ENCODE measurements at regions of chr9 and their contacts with region 1.

Region 1: GRCh38 chr9:35657546-35658136 is at the start of gene RMRP:
- DNase-seq: peak; percentile 99
- H3K4me3 ChIP-seq: peak within 1 kb of the TSS; percentile 97
- CTCF ChIP-seq: peak; percentile 42

Region 2: GRCh38 chr9:35211854-35212253 is 445.8 kb before region 1 on chr9:
- CTCF ChIA-PET with region 1: no interaction called
- POLR2A ChIA-PET with region 1: no interaction called
- DNase-seq: no peak
- H3K4me3 ChIP-seq: no peak overlapping the region
- CTCF ChIP-seq: no peak

Region 3: GRCh38 chr9:35526087-35526801 is 131.4 kb before region 1 on chr9:
- CTCF ChIA-PET with region 1: no interaction called
- POLR2A ChIA-PET with region 1: no interaction called
- DNase-seq: no peak
- H3K4me3 ChIP-seq: no peak overlapping the region
- CTCF ChIP-seq: no peak

Region 4: DNA sequence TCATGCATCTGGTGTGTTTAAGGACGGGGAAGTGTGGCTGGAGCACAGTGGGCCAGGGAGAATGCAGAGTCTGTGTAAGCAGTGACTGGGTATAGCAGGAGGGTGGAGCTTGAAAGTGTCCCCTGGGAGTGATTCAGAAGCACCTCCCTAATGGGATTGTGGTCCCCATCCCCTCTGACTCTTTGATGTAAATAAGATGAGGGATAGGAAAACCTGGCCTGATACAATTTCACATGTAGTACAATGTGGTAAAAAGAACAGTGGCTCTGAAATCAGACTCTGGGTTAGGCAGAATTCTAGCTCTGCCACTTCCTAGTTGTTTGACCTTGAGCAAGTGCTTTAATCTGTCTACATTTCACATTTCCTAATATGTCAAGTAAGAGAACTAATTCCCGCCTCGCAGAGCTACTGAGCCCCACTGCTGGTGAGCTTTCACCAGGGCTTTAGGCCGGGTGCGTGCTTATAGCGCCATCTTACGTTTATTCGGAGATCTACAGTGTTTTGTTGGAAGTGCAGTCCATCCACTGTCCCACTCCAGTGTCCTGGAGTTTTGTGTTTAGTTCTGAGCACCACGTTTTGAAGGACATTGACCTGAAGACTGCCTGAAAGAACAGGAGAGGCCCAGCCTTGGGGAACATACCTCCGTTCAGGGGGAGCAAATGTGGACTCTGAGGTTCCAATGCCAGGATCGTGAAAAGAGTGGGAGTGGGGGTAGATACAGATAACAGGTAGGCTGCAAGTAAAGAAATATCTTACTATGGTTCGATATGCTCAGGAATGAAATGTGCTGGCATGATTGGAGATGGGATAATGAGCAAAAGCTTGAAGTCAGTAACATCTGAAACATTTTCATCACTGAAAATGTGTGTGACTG is 103.7 kb before region 1 on chr9:
- CTCF ChIA-PET with region 1: no interaction called
- POLR2A ChIA-PET with region 1: no interaction called
- DNase-seq: no peak
- H3K4me3 ChIP-seq: no peak overlapping the region
- CTCF ChIP-seq: peak; percentile 68

Region 5: DNA sequence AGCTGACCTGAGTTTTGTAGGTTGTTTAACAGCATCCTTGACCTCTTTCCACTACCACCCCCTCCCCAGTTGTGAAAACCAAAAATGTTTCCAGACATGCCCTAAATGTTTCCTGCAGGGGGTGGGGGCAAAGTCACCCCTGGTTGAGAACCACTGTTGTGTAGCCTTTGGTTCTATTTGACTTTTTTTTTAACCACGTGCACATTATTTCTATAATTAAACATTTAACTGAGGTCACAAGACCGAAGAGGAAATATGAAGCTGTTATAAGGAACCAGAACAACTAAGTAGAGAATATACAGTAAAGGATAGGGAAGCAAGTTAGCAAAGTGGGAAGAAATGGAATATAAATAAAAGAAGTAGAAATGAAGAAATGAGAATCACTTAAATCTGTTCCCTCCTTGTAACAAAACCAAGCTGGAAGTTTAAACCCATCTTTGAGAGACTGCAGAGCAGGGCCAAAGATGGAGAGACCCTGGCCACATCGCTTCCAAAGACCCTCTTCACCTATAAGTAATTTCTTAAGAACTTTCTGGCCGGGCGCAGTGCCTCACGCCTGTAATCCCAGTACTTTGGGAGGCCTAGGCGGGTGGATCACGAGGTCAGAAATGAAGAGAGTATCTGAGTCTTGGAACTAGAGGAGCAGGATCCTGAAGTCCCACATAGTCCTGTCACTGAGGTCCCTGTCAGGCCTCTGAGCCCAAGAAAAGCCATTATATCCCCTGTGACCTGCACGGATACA is 21.3 kb before region 1 on chr9:
- CTCF ChIA-PET with region 1: no interaction called
- POLR2A ChIA-PET with region 1: no interaction called
- DNase-seq: no peak
- H3K4me3 ChIP-seq: no peak overlapping the region
- CTCF ChIP-seq: no peak

Region 6: GRCh38 chr9:35646533-35647265 is 10.9 kb before region 1 on chr9:
- CTCF ChIA-PET with region 1: interaction called, 148 read pairs
- POLR2A ChIA-PET with region 1: interaction called, 7 read pairs
- DNase-seq: no peak
- H3K4me3 ChIP-seq: peak overlapping the region; percentile 74
- CTCF ChIP-seq: peak; percentile 99

Region 7: DNA sequence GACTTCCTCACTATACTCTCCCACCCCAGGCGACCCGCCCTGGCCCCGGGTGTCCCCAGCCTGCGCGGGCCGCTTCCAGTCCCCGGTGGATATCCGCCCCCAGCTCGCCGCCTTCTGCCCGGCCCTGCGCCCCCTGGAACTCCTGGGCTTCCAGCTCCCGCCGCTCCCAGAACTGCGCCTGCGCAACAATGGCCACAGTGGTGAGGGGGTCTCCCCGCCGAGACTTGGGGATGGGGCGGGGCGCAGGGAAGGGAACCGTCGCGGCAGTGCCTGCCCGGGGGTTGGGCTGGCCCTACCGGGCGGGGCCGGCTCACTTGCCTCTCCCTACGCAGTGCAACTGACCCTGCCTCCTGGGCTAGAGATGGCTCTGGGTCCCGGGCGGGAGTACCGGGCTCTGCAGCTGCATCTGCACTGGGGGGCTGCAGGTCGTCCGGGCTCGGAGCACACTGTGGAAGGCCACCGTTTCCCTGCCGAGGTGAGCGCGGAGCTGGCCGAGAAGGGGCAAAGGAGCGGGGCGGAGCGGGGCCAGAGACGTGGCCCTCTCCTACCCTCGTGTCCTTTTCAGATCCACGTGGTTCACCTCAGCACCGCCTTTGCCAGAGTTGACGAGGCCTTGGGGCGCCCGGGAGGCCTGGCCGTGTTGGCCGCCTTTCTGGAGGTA is 18.2 kb after region 1 on chr9:
- CTCF ChIA-PET with region 1: interaction called, 41 read pairs
- POLR2A ChIA-PET with region 1: interaction called, 4 read pairs
- DNase-seq: no peak
- H3K4me3 ChIP-seq: peak overlapping the region; percentile 56
- CTCF ChIP-seq: peak; percentile 37

Region 8: DNA sequence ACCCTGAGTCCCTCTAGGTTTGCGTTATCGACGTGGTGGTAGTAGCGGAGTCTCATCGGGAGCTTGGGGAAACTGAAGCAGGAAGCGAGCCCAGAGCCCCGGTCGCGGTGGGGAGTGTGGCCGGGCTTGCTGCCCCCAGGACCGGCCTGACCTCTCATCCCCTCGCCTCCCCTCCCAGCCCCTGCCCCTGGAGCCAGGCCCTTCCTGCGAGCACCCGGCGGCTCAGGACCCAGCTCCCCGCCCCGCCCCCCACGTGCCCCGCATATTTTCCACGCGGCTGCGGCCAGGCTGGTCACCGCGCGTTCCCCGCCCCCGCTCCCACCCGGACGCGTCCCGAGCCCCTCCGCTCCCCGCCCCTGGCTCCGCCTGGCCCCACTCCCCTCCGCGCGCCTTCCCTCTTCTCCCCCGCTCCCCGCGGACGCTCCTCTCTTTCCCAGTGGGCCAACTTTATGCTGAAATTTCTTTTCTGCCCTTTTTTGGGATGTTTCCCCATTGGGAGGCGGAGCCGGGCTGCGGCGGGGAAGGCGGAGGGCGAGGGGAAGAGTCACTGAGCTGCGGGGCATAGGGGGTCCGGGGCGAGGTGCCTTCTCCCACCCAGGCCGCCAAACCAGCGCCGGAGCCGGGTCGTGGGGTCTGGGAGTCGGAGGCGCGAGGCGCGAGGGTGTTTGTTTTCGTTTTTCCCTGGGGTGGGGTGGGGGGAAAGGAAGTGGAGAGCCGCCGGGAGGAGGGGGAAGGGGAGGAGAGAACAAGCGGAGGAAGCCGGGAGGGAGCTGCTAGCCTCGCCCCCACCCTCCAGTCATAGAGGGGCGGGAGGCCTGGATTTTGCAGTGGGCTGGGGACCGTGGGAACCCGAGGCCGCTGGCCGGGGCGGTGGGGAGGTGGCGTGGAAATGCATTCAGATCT is 33.0 kb after region 1 on chr9:
- CTCF ChIA-PET with region 1: interaction called, 54 read pairs
- POLR2A ChIA-PET with region 1: interaction called, 39 read pairs
- DNase-seq: no peak
- H3K4me3 ChIP-seq: peak overlapping the region; percentile 97
- CTCF ChIP-seq: no peak

Region 9: DNA sequence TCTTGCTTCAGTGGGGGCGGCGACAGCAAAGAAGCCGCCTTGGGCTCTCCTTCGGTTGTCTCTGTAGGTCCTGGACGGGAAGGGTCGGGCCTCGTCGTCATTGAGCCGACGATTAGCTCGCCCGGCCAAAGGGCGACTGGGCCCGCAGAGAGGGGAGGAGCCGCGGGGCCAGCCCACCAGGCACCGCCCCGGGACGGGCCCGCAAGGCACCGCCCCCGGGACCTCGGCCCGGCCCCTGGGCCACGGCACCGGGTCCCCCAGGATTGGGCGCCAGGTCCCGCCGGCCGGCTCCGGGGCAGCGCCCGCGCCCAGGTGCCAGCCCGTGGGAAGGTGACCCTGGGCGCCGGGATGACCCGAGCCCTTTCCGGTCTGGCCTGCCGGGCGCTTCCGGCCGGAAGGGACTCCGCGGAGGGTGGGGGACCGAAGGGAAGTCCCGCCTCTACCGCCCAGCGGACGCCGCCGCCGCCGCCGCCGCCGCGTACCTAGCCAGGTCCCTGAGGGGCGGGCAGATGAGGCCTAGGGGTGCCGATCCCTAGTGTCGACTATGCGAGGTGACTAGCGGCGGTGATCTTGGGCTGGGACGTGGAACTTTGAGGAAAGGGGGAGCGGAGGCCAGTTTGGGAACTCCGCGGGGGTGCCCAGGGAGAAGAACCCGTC is 91.3 kb after region 1 on chr9 and contains the starts of genes GBA2 and RGP1:
- CTCF ChIA-PET with region 1: interaction called, 12 read pairs
- POLR2A ChIA-PET with region 1: no interaction called
- DNase-seq: no peak
- H3K4me3 ChIP-seq: peak within 1 kb of the TSS; percentile 89
- CTCF ChIP-seq: no peak

Measured in AG04449 (cell line).